A549 (cell line): ENCODE measurements at regions of chr4 and their contacts with region 1.

Region 1: DNA sequence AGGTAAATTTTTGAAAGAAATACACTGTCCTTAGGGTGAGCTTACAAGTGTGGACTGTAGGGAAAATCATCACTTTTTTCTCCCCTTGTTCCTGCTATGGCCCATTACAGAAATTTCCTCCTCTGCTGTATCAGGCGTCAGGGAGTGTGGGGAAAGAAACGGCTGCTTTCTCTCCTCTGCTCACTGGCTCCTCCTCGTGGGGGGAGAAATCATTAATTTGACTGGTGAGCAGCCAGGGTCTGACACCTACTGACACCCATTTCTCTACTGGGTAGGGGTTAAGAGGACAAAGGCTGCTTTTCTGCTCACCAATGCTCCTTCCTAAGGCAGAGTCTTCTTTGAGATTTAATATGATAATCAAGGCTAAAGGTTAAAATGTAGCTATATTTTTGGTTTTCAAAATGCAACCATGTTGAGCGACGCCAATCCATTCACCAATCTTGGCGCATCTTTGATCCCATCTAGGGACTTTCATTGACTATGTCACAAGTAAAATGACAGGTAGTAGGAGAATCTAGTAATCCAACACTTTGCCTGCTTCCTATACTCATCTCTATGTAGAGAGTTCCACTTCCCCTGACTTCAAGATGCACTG is 25.1 kb downstream of the SETD7 start:
- DNase-seq: peak; percentile 50 to 72
- ATAC-seq: peak; percentile 83 to 90
- H3K4me3 ChIP-seq: no peak overlapping the region
- H3K27ac ChIP-seq: no peak overlapping the region
- H3K4me1 ChIP-seq: peaks cover 18% of the 10 kb centered on the region
- CTCF ChIP-seq: peak; percentile 61
- EP300 ChIP-seq: no peak
- POLR2A ChIP-seq: no peak
- RAD21 ChIP-seq: peak; percentile 40 to 43; a peak in 4 of 5 replicates

Region 2: DNA sequence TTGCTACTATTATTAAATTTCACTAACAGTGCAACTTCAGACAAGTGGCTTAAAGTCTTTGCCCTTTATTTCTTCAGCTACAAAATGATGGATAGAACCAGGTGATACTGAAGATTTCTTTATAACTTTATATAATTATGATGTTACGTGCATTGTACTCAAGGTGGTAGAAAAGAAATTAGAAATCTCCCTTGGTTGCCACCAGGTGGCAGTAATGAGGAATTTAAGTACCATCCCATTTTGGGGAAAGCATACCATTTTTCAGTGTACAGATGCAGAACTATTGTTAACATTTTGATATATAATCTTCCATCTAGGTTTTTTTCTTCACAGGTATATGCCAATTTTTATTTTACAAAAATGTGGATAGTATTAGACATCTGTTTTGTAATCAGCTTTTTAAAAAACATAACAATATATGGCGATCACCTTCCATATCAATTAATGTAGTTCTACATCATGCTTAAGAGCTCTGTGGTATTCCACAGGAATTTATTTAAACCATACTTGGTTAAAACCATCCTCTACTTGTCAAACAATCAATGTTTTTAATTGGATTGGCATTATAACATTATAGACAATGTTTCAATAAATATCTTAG is 114.8 kb before region 1 on chr4:
- CTCF ChIA-PET with region 1: no interaction called
- POLR2A ChIA-PET with region 1: no interaction called
- DNase-seq: peak in 1 of 2 experiments; percentile 51
- ATAC-seq: peak in 1 of 2 experiments; percentile 66; a peak in 4 of 6 replicates
- H3K4me3 ChIP-seq: no peak overlapping the region
- H3K27ac ChIP-seq: no peak overlapping the region
- H3K4me1 ChIP-seq: no peaks in the 10 kb centered on the region
- CTCF ChIP-seq: peak; percentile 62
- EP300 ChIP-seq: no peak
- POLR2A ChIP-seq: no peak
- RAD21 ChIP-seq: peak; percentile 30 to 47; a peak in 4 of 5 replicates

Region 3: DNA sequence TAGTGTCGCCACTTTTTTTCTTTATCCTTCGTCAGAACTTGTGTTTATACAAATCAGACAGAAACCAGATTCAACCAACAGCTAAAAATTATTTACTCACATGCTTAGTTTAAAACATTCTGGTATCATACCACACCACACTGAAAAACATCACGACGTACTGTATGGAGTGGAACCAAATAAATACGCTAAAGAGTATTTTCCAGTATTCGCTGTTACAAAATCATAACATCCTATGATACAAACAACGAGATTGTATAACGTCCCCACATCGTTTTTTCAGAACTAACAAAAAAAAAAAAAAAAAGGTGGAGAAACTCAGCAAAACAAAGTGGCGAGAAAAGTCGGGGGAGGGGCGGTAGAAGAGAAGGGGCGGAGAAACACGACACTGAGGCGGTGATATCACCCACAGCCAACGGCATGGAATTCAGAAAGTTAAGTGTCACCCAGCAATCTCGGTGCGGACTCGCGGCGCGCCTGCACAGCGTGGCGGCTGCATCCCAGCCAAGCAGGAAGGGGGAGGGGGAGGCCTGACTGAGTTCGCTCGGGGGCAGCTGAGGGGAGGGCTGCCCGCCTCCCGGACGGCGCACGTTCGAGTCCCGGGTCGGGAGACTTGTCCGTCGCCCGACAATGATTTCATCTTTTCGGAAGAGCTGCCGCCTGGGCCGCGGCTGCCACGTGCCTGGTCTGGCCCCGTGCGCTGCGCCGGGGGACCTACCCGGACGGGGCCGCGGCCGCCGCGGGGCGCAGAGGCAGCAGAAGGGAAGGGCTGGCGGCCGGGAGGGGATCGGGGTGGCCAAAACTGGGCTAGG is 24.2 kb after region 1 on chr4:
- CTCF ChIA-PET with region 1: interaction called, 13 read pairs
- POLR2A ChIA-PET with region 1: no interaction called
- DNase-seq: peak; percentile 53 to 91
- ATAC-seq: peak; percentile 61 to 68
- H3K4me3 ChIP-seq: peak overlapping the region; percentile 88
- H3K27ac ChIP-seq: peak overlapping the region; percentile 98 to 99
- H3K4me1 ChIP-seq: peaks cover 58% of the 10 kb centered on the region
- CTCF ChIP-seq: no peak
- EP300 ChIP-seq: no peak
- POLR2A ChIP-seq: peak; percentile 82
- RAD21 ChIP-seq: no peak